ENCODE measurements at regions of chr3 and their contacts with region 1.

Region 1: DNA sequence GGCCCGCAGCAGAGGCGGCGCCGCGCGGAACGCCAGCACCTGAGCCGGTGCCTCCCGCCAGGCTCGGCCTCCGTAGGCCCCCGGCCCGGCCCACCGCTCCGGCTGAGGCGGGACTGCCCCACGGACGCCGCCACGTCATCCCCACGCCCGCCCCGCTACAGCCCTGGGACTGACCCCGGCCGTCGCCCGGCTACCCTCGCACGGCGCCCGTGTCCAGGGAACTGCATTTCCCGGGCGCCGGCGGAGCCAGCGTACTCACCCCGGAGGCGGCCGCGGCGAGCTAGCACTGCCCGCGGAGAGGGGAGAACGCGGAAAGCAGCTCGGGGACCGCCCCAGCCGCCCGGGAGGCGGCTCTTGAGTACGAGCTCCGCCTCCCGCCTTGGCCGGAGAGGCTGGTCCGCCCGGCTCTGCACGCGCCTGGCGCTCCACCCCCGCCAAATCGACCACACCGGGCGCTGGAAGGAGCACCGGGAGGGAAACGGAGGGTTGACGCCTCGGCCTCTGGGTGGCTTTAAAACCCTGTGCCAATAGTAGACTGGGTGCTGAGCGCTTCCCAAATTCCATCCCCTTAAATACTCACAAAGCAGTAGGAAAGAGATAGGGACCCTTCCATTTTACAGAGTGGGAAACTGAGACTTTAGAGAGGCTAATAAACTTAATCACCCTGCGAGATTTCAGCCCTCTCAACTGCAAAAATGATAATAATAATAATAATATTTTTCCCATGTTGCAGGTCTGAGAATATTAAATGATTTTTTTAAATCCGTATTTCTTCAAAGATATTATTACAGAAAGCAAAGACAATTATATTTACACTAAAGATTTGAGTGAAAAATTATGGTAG is at the start of gene B4GALT4:
- DNase-seq: peak; percentile 70
- H3K4me3 Mint-ChIP-seq: peak within 1 kb of the TSS; percentile 88
- H3K27ac Mint-ChIP-seq: peak within 1 kb of the TSS; percentile 96
- H3K4me1 Mint-ChIP-seq: peaks cover 31% of the 10 kb centered on the region
- H3K27me3 Mint-ChIP-seq: no peaks in the 10 kb centered on the region
- total RNA-seq, gene B4GALT4: 22.0 to 22.8 TPM

Region 2: DNA sequence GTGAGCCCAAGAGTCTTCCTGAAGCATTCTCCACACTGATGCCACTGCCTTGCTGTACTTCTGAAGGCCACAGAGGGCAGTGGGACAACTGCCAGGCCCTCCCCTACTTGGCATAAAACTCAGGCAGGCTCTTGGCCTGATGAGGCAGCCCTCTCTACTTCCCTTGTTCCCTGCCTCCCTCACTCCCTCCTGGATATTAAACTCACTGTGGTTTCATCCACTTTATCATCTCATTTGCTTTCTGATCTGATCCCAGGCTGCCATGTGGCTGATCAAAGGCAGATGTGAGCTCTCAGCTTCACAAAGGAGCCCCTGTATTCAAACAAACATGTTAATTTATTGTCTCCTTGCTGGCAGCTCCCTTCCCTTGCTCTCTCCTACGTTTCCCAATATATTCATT is 739.7 kb before region 1 on chr3:
- CTCF ChIA-PET with region 1: no interaction called
- intact Hi-C with region 1: no loop called
- DNase-seq: no peak
- H3K4me3 Mint-ChIP-seq: no peak overlapping the region
- H3K27ac Mint-ChIP-seq: no peak overlapping the region
- H3K4me1 Mint-ChIP-seq: no peaks in the 10 kb centered on the region
- H3K27me3 Mint-ChIP-seq: no peaks in the 10 kb centered on the region

Region 3: DNA sequence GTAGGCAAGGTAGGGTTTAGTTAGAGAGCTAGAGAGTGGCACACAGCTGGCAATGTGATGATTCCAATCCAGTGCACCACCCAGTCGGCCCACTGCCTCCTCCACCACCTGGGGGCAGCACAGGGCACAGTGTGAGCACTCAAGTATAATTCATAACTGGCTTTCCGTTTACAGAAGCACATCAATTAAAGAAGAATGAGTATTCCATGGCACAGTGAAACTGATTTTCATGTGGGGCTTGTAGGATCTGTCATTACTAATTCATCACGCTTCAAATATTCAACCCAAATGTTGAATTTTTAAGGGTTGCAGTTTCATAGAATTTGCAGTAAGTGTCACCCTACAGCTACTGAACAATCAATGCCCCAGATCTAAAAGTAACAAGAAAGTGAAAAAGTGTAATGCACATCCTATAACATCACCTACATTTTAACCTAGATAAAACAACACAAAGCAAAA is 356.0 kb before region 1 on chr3:
- CTCF ChIA-PET with region 1: interaction called, 53 read pairs
- intact Hi-C with region 1: loop called (anchors 1 kb)
- DNase-seq: peak; percentile 89
- H3K4me3 Mint-ChIP-seq: no peak overlapping the region
- H3K27ac Mint-ChIP-seq: no peak overlapping the region
- H3K4me1 Mint-ChIP-seq: no peaks in the 10 kb centered on the region
- H3K27me3 Mint-ChIP-seq: peaks cover 8% of the 10 kb centered on the region

Region 4: GRCh38 chr3:119098619-119099222 is 142.1 kb before region 1 on chr3:
- CTCF ChIA-PET with region 1: interaction called, 6 read pairs
- intact Hi-C with region 1: loop called (anchors 1 kb)
- DNase-seq: no peak
- H3K4me3 Mint-ChIP-seq: no peak overlapping the region
- H3K27ac Mint-ChIP-seq: no peak overlapping the region
- H3K4me1 Mint-ChIP-seq: no peaks in the 10 kb centered on the region
- H3K27me3 Mint-ChIP-seq: no peaks in the 10 kb centered on the region

Region 5: DNA sequence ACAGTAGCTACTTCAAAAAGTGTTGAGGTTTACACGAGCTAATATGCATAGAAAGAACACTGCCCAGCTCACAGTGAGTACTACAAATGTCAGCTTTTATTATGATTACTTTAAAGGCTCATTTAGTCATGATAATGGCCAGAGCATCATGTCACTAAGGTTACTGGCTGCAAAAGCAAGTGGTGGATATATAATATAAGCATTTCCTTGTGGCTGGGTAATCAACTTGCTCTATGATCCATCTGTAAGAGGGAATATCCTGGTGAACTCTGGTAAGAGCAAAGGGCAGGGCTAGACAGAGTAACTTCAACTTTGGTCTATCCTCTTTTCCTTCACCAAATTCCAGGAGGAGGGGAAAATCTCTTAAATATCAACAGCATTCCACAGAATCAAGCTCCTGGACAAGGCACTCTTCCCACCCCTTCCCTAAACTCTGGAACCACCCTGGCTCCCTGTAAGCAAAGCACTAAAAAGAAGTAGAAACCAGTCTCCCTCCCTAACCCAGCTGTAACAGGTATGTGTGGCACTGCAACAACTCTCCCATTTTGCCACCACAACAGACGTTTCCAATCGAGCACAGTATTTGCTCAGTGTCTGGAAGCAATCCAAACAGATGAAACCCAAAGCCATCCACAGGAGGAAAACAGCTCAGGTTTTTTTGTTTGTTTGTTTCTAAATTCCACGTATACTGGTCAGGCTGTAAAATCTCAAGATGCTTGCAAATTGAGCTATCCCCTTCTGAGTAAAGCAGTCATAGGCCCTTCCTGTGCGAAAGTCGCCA is 13.6 kb before region 1 on chr3:
- CTCF ChIA-PET with region 1: interaction called, 28 read pairs
- intact Hi-C with region 1: loop called (anchors 1 kb)
- DNase-seq: no peak
- H3K4me3 Mint-ChIP-seq: no peak overlapping the region
- H3K27ac Mint-ChIP-seq: peak overlapping the region; percentile 37
- H3K4me1 Mint-ChIP-seq: peaks cover 73% of the 10 kb centered on the region
- H3K27me3 Mint-ChIP-seq: no peaks in the 10 kb centered on the region

Region 6: GRCh38 chr3:119352849-119353502 is 112.2 kb after region 1 on chr3:
- CTCF ChIA-PET with region 1: interaction called, 20 read pairs
- intact Hi-C with region 1: loop called (anchors 1 kb)
- DNase-seq: peak; percentile 13
- H3K4me3 Mint-ChIP-seq: no peak overlapping the region
- H3K27ac Mint-ChIP-seq: peak overlapping the region; percentile 43
- H3K4me1 Mint-ChIP-seq: peaks cover 30% of the 10 kb centered on the region
- H3K27me3 Mint-ChIP-seq: no peaks in the 10 kb centered on the region

Region 7: DNA sequence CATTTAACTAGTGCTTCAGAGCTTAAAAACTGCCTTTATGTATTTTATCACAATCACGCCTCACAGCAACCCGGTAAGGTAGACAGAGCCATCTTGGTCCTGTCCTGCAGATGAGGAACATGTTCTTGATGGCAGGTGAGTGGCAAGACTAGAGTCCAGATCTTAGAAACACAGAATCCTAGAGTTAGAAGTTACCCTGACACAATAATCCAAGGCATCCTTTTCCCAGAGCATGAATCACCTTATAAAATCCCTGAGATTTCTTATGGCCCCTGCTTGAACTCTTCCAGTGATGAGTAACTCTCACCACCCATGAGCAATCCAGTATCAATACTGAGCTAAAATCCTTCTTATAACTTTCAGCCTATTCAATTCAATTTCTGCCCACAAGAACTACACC is 402.7 kb after region 1 on chr3:
- CTCF ChIA-PET with region 1: no interaction called
- intact Hi-C with region 1: loop called (anchors 1 kb)
- DNase-seq: no peak
- H3K4me3 Mint-ChIP-seq: no peak overlapping the region
- H3K27ac Mint-ChIP-seq: peak overlapping the region; percentile 48
- H3K4me1 Mint-ChIP-seq: peaks cover 37% of the 10 kb centered on the region
- H3K27me3 Mint-ChIP-seq: no peaks in the 10 kb centered on the region

Measured in activated naive CD4-positive, alpha-beta T cell treated with anti-CD3 and anti-CD28 coated beads for 36 hours (primary cell).